Endothelial cell of umbilical vein (primary cell): ENCODE measurements at regions of chr6 and their contacts with region 1.

Region 1: DNA sequence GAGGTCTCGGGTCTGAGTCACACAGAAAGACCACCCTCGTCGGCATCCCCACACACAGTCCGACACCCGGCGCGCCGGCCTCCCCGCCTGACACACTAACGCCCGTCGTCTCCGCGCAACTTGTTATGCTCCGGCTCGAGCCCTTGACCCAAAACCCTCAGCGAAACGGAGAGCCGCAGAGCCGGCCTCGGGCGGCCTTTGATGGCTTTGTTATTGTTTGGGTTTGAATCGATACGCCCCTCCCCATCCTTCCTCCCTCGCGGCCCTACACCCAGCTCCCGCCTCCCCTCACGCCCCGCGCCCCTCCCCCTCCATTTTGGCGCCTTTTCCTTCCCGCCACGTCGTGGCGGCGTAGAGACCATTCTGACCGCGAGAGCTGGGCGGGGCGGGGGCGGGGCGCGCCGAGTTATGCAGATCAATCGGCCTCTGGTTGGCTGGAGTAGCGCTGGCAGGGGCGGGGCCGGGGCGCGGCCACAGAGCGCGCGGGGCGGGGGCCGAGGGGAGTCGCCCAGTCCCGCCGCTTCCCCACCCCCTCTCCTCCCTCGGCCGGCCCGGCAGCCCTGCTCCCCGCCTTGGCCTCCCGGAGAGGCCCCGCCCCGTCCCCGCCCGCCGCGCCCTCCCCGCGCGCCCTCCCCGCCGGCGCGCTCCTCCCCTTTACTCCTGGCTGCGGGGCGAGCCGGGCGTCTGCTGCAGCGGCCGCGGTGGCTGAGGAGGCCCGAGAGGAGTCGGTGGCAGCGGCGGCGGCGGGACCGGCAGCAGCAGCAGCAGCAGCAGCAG is at the start of gene PIM1:
- DNase-seq: peak; percentile 97
- H3K4me3 ChIP-seq: peak within 1 kb of the TSS; percentile 61 to 95 (median 74)
- H3K27ac ChIP-seq: peak within 1 kb of the TSS; percentile 66
- H3K4me1 ChIP-seq: peaks cover 22% of the 10 kb centered on the region
- H3K27me3 ChIP-seq: no peaks in the 10 kb centered on the region
- CTCF ChIP-seq: no peak
- POLR2A ChIP-seq: peak; percentile 4
- total RNA-seq, gene PIM1: 10.5 and 11.3 TPM in 2 replicates

Region 2: GRCh38 chr6:36885461-36886401 is 284.0 kb before region 1 on chr6 and contains the start of gene C6orf89:
- CTCF ChIA-PET with region 1: interaction called, 3 read pairs
- POLR2A ChIA-PET with region 1: no interaction called
- dilution Hi-C with region 1: no loop called
- intact Hi-C with region 1: loop called (anchors 1 kb)
- DNase-seq: peak; percentile 96
- H3K4me3 ChIP-seq: peak within 1 kb of the TSS; percentile 77 to 95 (median 84)
- H3K27ac ChIP-seq: peak within 1 kb of the TSS; percentile 76
- H3K4me1 ChIP-seq: peaks cover 12% of the 10 kb centered on the region
- H3K27me3 ChIP-seq: no peaks in the 10 kb centered on the region
- CTCF ChIP-seq: peak; percentile 78 to 84
- POLR2A ChIP-seq: peak; percentile 89
- total RNA-seq, gene C6orf89: 34.0 and 36.4 TPM in 2 replicates

Region 3: DNA sequence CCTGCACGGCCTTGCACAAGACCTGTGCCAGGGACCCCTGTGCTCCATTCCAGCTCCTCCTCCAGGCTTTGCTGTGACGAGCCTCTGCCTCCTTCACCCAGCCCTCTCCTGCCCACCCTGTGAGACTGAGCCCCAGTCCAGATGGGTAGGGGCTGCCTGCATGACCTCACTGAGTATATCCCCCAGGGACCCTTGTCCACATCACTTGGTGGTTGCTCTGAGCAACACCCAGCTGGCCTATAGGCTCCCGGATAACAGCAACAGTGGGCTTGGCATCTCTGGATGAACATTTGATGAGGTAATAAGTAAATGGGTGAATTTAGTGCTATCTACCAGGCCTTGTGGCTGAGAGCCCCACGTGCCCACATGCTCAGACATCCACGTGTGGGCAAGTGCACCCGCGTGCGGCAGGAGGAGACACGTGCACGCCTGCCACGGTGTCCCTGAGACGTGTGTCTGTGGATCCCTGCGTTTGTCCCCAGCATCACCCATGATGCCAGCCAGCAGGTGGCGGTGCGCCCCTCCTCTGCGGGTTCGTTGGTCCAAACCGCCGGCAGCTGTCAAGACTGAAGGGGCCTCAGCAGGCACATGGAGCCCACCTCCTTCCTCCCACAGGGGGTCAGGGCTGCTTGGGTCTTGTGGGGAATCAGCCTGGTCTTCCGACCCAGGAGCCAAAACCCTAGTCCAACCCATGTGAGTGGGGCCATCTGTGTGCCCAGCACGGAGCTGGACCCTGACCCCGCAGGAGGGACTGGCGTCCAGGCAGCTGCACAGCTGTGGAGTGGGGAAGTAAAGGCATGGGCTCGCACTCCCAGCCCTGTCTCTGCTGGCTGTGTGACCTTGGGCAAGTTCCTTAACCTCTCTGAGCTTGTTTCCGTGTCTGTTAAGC is 118.3 kb before region 1 on chr6:
- CTCF ChIA-PET with region 1: interaction called, 399 read pairs
- POLR2A ChIA-PET with region 1: interaction called, 7 read pairs
- dilution Hi-C with region 1: no loop called
- intact Hi-C with region 1: loop called (anchors 1 kb)
- DNase-seq: peak; percentile 79
- H3K4me3 ChIP-seq: no peak overlapping the region
- H3K27ac ChIP-seq: no peak overlapping the region
- H3K4me1 ChIP-seq: no peaks in the 10 kb centered on the region
- H3K27me3 ChIP-seq: peaks cover 0 to 4% of the 10 kb centered on the region in 2 experiments
- CTCF ChIP-seq: peak; percentile 81 to 93
- POLR2A ChIP-seq: no peak

Region 4: GRCh38 chr6:37102279-37103168 is 67.2 kb before region 1 on chr6:
- CTCF ChIA-PET with region 1: interaction called, 10 read pairs
- POLR2A ChIA-PET with region 1: no interaction called
- dilution Hi-C with region 1: no loop called
- intact Hi-C with region 1: loop called (anchors 1 kb)
- DNase-seq: peak; percentile 83
- H3K4me3 ChIP-seq: peak overlapping the region; percentile 15 to 63 (median 22)
- H3K27ac ChIP-seq: peak overlapping the region; percentile 72
- H3K4me1 ChIP-seq: peaks cover 18% of the 10 kb centered on the region
- H3K27me3 ChIP-seq: no peaks in the 10 kb centered on the region
- CTCF ChIP-seq: no peak
- POLR2A ChIP-seq: peak; percentile 33

Region 5: GRCh38 chr6:37137201-37138090 is 32.2 kb before region 1 on chr6:
- CTCF ChIA-PET with region 1: interaction called, 10 read pairs
- POLR2A ChIA-PET with region 1: no interaction called
- dilution Hi-C with region 1: no loop called
- intact Hi-C with region 1: loop called (anchors 1 kb)
- DNase-seq: peak; percentile 96
- H3K4me3 ChIP-seq: no peak overlapping the region
- H3K27ac ChIP-seq: peak overlapping the region; percentile 99
- H3K4me1 ChIP-seq: peaks cover 44% of the 10 kb centered on the region
- H3K27me3 ChIP-seq: no peaks in the 10 kb centered on the region
- CTCF ChIP-seq: no peak
- POLR2A ChIP-seq: no peak

Region 6: GRCh38 chr6:37207903-37208456 is 38.3 kb after region 1 on chr6:
- CTCF ChIA-PET with region 1: interaction called, 32 read pairs
- POLR2A ChIA-PET with region 1: no interaction called
- dilution Hi-C with region 1: no loop called
- intact Hi-C with region 1: loop called (anchors 1 kb)
- DNase-seq: peak; percentile 83
- H3K4me3 ChIP-seq: no peak overlapping the region
- H3K27ac ChIP-seq: no peak overlapping the region
- H3K4me1 ChIP-seq: peaks cover 3% of the 10 kb centered on the region
- H3K27me3 ChIP-seq: peaks cover 20 to 25% of the 10 kb centered on the region in 2 experiments
- CTCF ChIP-seq: peak; percentile 72 to 84
- POLR2A ChIP-seq: no peak

Region 7: GRCh38 chr6:37265001-37265400 is 95.3 kb after region 1 on chr6:
- CTCF ChIA-PET with region 1: no interaction called
- POLR2A ChIA-PET with region 1: no interaction called
- dilution Hi-C with region 1: no loop called
- intact Hi-C with region 1: no loop called
- DNase-seq: no peak
- H3K4me3 ChIP-seq: no peak overlapping the region
- H3K27ac ChIP-seq: no peak overlapping the region
- H3K4me1 ChIP-seq: peaks cover 2% of the 10 kb centered on the region
- H3K27me3 ChIP-seq: no peaks in the 10 kb centered on the region
- CTCF ChIP-seq: no peak
- POLR2A ChIP-seq: no peak